A549 (cell line): ENCODE measurements at regions of chr12 and their contacts with region 1.

Region 1: GRCh38 chr12:69157023-69157655 is 82.2 kb upstream of the CPSF6 start:
- DNase-seq: peak; percentile 65 to 88
- ATAC-seq: peak; percentile 96 to 98
- H3K4me3 ChIP-seq: no peak overlapping the region; the same call in 2 of the 3 replicates
- H3K27ac ChIP-seq: peak overlapping the region; percentile 32 to 70; a peak in 4 of 6 replicates
- H3K4me1 ChIP-seq: 0 out of 3 replicates have a peak, but pooled peaks cover 3% of the 10 kb centered on the region
- CTCF ChIP-seq: peak; percentile 85
- EP300 ChIP-seq: no peak
- POLR2A ChIP-seq: no peak
- RAD21 ChIP-seq: peak; percentile 66 to 78

Region 2: DNA sequence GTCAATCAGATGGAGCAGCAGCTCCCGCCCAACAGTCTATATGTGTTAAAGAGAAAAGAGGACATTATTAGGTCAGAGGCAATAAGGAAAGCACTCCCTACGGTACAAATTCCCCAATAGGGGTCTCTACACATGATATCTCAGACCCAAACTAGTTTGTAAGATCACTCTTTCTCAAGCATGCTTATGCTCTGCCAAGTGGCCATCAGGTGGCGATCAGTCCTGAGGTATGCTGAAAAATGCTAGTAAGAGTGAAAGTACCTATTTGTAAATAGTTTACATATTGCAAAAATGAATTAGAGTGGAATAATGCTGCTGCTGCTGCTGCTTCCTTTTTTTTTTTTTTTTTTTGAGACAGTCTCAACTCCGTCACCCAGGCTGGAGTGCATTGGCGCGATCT is 285.2 kb before region 1 on chr12:
- CTCF ChIA-PET with region 1: interaction called, 25 read pairs
- POLR2A ChIA-PET with region 1: no interaction called
- DNase-seq: peak in 1 of 2 experiments; percentile 47
- ATAC-seq: peak in 1 of 2 experiments; percentile 68; a peak in 3 of 6 replicates
- H3K4me3 ChIP-seq: no peak overlapping the region
- H3K27ac ChIP-seq: no peak overlapping the region
- H3K4me1 ChIP-seq: no peaks in the 10 kb centered on the region
- CTCF ChIP-seq: peak; percentile 32; the same call in 1 of the 3 replicates
- EP300 ChIP-seq: no peak
- POLR2A ChIP-seq: no peak
- RAD21 ChIP-seq: peak; percentile 22 to 64; a peak in 2 of 5 replicates

Region 3: DNA sequence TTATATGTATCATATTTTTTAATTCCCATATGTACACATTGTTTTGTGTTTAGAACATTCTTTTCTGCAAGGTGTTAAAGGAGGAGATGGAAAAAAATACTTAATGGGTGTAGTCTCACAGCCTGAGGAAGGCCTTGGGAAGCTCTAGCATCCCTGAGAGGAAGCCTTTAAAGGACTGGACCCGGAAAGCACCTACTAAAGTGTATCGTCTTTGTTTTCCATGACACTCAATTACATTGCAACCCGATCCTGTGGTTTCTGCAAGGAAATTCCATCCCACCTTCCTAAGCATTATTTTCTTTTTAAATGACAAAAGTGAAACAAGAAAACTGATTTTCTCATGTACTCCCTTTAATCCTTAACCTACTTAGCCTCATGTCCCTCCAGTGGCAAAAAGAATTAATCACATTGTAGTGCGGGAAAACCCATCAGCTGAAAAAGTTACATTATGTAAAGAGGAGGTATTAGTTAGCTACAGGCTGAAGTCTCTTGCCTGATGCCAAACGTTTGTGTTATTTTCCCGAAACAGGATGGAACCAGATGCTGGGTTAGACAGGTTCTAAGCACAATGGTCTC is 65.6 kb before region 1 on chr12:
- CTCF ChIA-PET with region 1: no interaction called
- POLR2A ChIA-PET with region 1: no interaction called
- DNase-seq: no peak
- ATAC-seq: peak in 1 of 2 experiments; percentile 33; a peak in 1 of 6 replicates
- H3K4me3 ChIP-seq: no peak overlapping the region
- H3K27ac ChIP-seq: no peak overlapping the region
- H3K4me1 ChIP-seq: no peaks in the 10 kb centered on the region
- CTCF ChIP-seq: no peak
- EP300 ChIP-seq: no peak
- POLR2A ChIP-seq: no peak
- RAD21 ChIP-seq: no peak

Region 4: DNA sequence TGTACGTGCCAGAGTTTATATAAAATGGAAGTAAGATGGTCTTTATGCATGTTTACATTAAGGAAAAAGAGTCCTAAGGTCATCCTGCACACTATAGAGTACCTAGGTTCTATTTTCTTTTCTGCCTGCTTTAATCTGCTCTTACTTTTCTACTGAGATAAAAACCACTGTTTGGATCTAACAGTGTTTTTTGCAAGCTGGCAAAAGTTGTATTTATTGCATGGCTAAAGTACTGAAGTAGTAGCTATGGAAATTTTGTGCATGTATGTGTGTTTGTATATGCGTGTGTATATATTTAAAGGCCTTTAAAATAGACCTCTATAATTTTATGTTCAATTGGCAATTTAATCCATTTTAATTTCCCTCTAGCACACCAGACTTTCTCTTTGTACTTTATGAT is 16.1 kb before region 1 on chr12:
- CTCF ChIA-PET with region 1: interaction called, 19 read pairs
- POLR2A ChIA-PET with region 1: no interaction called
- DNase-seq: no peak
- ATAC-seq: no peak
- H3K4me3 ChIP-seq: no peak overlapping the region
- H3K27ac ChIP-seq: no peak overlapping the region
- H3K4me1 ChIP-seq: no peaks in the 10 kb centered on the region
- CTCF ChIP-seq: no peak
- EP300 ChIP-seq: no peak
- POLR2A ChIP-seq: no peak
- RAD21 ChIP-seq: no peak

Region 5: DNA sequence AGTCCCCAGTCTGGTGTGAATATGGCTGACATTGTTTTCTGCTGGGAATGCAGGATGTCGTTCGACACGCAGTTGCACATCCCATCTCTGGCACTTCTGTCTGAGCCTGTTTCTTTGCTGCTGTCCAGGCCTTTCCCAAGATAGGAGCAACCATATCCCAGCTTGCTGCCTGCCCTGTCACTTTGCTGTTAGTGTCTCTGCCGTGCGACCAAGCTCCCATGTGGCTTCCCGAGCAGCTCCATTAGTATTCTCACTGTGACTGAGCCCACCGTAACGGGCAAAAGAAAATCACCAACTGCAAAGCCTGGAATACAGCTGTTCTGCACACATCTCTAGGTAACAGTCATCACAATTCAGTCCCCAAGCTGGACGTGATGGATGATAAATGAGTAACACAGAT is 16.2 kb after region 1 on chr12:
- CTCF ChIA-PET with region 1: interaction called, 85 read pairs
- POLR2A ChIA-PET with region 1: no interaction called
- DNase-seq: no peak
- ATAC-seq: no peak; a peak in 2 of 6 replicates
- H3K4me3 ChIP-seq: no peak overlapping the region
- H3K27ac ChIP-seq: no peak overlapping the region
- H3K4me1 ChIP-seq: no peaks in the 10 kb centered on the region
- CTCF ChIP-seq: no peak
- EP300 ChIP-seq: no peak
- POLR2A ChIP-seq: no peak
- RAD21 ChIP-seq: no peak

Region 6: DNA sequence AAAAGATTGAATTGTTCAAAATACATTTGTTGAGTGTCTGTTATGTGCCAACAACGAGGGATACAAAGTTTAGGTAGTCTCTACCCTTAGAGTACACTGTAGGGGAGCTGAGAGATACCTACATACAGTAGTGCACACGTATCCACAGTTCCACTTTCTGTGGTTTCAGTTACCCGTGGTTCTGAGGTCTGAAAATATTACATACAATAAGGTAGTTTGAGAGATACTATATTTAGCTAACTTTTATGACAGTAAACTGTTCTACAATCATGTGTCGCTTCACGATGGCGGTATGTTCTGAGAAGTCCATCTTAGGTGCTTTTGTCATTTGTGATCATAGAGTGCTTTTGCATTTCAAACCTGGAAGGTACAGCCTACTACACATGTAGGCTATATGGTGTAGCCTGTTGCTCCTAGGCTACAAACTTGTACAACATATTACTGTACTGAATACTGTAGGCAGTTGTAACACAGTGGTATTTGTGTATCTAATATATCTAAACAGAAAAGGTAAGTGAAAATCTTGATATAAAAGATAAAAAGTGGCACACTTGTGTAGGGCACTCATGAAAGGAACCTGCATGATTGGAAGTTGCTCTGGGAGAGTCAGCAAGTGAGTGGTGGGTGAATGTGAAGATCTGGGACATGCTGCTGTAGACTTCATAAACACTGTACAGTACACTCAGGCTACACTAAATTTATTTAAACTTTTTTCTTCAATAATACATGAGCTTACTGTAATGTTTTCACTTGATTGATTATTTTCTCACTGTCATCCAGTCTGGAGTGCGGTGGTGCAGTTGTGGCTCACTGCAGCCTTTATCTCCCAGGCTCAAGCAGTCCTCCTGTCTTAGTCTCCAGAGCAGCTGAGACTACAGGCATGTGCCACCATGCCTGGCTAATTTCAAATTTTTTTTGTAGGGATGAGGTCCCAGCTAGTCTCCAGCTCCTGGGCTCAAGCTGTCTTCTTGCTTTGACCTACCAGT is 86.3 kb after region 1 on chr12:
- CTCF ChIA-PET with region 1: interaction called, 5 read pairs
- POLR2A ChIA-PET with region 1: interaction called, 12 read pairs
- DNase-seq: no peak
- ATAC-seq: no peak
- H3K4me3 ChIP-seq: no peak overlapping the region
- H3K27ac ChIP-seq: no peak overlapping the region
- H3K4me1 ChIP-seq: peaks cover 43% of the 10 kb centered on the region; the same call in 2 of the 3 replicates
- CTCF ChIP-seq: no peak
- EP300 ChIP-seq: no peak
- POLR2A ChIP-seq: no peak
- RAD21 ChIP-seq: no peak

Region 7: DNA sequence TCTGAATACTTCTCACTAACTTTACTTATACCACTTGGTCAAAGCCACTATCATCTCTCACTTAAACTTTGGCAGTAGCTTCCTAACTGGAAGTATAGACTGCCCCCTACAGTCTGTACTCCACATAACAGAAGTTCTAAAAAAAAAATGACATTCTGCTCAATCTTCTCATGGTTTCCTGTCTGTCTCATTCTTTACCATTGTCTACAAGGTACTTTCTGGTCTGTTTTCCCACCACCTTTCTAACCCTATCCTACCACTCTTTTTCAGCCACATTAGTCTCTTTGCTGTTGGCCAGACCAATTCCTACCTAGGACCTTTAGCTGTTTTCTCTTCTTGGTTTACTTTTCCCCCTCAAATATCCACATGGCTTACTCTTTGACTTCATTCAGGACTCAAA is 96.9 kb after region 1 on chr12:
- CTCF ChIA-PET with region 1: interaction called, 12 read pairs
- POLR2A ChIA-PET with region 1: no interaction called
- DNase-seq: peak; percentile 13 to 64
- ATAC-seq: peak in 1 of 2 experiments; percentile 61; a peak in 2 of 6 replicates
- H3K4me3 ChIP-seq: no peak overlapping the region
- H3K27ac ChIP-seq: no peak overlapping the region
- H3K4me1 ChIP-seq: 0 out of 3 replicates have a peak, but pooled peaks cover 4% of the 10 kb centered on the region
- CTCF ChIP-seq: peak; percentile 72
- EP300 ChIP-seq: no peak
- POLR2A ChIP-seq: no peak
- RAD21 ChIP-seq: peak; percentile 50 to 55